PC-3 (cell line): ENCODE measurements at regions of chr12 and their contacts with region 1.

Region 1: GRCh38 chr12:56775638-56776037 is 12.5 kb downstream of the HSD17B6 start:
- DNase-seq: no peak
- ATAC-seq: no peak
- H3K4me3 ChIP-seq: no peak overlapping the region
- H3K27ac ChIP-seq: no peak overlapping the region
- H3K4me1 ChIP-seq: no peaks in the 10 kb centered on the region
- H3K27me3 ChIP-seq: no peaks in the 10 kb centered on the region
- CTCF ChIP-seq: no peak

Region 2: GRCh38 chr12:56431850-56432249 is 343.8 kb before region 1 on chr12:
- CTCF ChIA-PET with region 1: no interaction called
- POLR2A ChIA-PET with region 1: no interaction called
- intact Hi-C with region 1: no loop called
- DNase-seq: no peak
- ATAC-seq: no peak
- H3K4me3 ChIP-seq: no peak overlapping the region
- H3K27ac ChIP-seq: no peak overlapping the region
- H3K4me1 ChIP-seq: no peaks in the 10 kb centered on the region
- H3K27me3 ChIP-seq: no peaks in the 10 kb centered on the region
- CTCF ChIP-seq: no peak

Region 3: GRCh38 chr12:56593909-56594621 is 181.6 kb before region 1 on chr12:
- CTCF ChIA-PET with region 1: no interaction called
- POLR2A ChIA-PET with region 1: no interaction called
- intact Hi-C with region 1: no loop called
- DNase-seq: peak; percentile 78
- ATAC-seq: peak; percentile 65
- H3K4me3 ChIP-seq: no peak overlapping the region
- H3K27ac ChIP-seq: no peak overlapping the region
- H3K4me1 ChIP-seq: no peaks in the 10 kb centered on the region
- H3K27me3 ChIP-seq: no peaks in the 10 kb centered on the region
- CTCF ChIP-seq: peak; percentile 92

Region 4: DNA sequence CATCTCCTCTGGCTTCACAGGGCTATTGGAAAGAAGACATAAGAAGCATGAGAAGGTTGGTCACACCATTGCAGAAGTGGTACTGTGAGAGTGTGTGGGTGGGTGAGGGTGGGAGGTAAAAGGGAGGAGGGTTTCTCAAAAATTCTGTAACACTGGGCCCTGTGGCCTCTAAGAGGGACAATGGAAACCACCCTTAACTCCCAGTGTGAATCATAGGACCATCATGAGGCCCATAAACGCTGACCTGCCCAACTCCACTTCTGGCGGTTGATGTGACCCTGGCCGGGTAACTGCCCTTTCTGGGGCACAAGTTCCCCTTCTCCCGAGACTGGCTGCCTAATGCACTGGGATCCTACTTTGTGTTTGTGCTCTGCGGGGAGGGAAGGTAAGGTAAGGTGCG is 995.6 kb after region 1 on chr12:
- CTCF ChIA-PET with region 1: no interaction called
- POLR2A ChIA-PET with region 1: interaction called, 18 read pairs
- intact Hi-C with region 1: no loop called
- DNase-seq: peak; percentile 25
- ATAC-seq: no peak
- H3K4me3 ChIP-seq: peak overlapping the region; percentile 84
- H3K27ac ChIP-seq: peak overlapping the region; percentile 86
- H3K4me1 ChIP-seq: peaks cover 27% of the 10 kb centered on the region
- H3K27me3 ChIP-seq: no peaks in the 10 kb centered on the region
- CTCF ChIP-seq: no peak